Activated naive CD8-positive, alpha-beta T cell treated with anti-CD3 and anti-CD28 coated beads, Interleukin-2, amount 10 ng/mL, durations not matched to agents 7 days and 5 days (primary cell): ENCODE measurements at regions of chr17 and their contacts with region 1.

Region 1: GRCh38 chr17:79796763-79797491 is at the start of gene CBX8:
- DNase-seq: peak; percentile 99
- ATAC-seq: peak; percentile 89
- H3K4me3 Mint-ChIP-seq: peak within 1 kb of the TSS; percentile 89
- H3K27ac Mint-ChIP-seq: peak within 1 kb of the TSS; percentile 84
- H3K4me1 Mint-ChIP-seq: peaks cover 27% of the 10 kb centered on the region
- H3K27me3 Mint-ChIP-seq: peaks cover 35% of the 10 kb centered on the region
- total RNA-seq, gene CBX8: 4.9 to 5.5 TPM

Region 2: GRCh38 chr17:79691931-79692330 is 105.0 kb before region 1 on chr17:
- POLR2A ChIA-PET with region 1: no interaction called
- DNase-seq: no peak
- ATAC-seq: no peak
- H3K4me3 Mint-ChIP-seq: no peak overlapping the region
- H3K27ac Mint-ChIP-seq: no peak overlapping the region
- H3K4me1 Mint-ChIP-seq: no peaks in the 10 kb centered on the region
- H3K27me3 Mint-ChIP-seq: peaks cover 7% of the 10 kb centered on the region

Region 3: DNA sequence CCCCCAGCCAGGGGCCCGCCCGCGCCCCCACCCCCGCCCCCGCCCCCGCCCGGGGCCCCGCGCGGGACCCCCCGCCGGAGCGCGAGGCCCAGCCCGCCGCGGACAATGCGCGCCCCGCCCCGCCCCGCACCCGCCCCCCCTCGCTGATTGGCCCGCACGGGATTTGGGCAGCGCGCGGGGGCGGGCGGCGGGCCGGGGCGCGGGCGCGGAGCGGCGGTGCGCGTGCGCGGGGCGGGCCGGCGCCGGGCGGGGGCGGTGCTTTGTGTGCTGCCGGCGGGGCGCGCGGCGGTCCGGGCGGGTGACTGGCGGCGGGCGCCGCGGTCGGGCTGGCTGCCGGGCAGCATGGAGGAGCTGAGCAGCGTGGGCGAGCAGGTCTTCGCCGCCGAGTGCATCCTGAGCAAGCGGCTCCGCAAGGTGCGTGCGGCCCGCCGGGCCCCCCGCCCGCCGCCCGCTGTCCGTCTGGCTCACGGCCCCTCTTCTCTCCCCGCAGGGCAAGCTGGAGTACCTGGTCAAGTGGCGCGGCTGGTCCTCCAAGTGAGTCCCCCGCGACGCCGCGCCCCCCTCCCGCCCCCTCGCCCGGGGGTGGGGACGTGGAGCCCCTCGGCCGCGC is 18.9 kb before region 1 on chr17 and contains the start of gene CBX2:
- POLR2A ChIA-PET with region 1: interaction called, 17 read pairs
- DNase-seq: peak; percentile 92
- ATAC-seq: peak; percentile 82
- H3K4me3 Mint-ChIP-seq: peak within 1 kb of the TSS; percentile 93
- H3K27ac Mint-ChIP-seq: peak within 1 kb of the TSS; percentile 78
- H3K4me1 Mint-ChIP-seq: peaks cover 32% of the 10 kb centered on the region
- H3K27me3 Mint-ChIP-seq: peaks cover 48% of the 10 kb centered on the region
- total RNA-seq, gene CBX2: 9.2 to 9.6 TPM

Region 4: DNA sequence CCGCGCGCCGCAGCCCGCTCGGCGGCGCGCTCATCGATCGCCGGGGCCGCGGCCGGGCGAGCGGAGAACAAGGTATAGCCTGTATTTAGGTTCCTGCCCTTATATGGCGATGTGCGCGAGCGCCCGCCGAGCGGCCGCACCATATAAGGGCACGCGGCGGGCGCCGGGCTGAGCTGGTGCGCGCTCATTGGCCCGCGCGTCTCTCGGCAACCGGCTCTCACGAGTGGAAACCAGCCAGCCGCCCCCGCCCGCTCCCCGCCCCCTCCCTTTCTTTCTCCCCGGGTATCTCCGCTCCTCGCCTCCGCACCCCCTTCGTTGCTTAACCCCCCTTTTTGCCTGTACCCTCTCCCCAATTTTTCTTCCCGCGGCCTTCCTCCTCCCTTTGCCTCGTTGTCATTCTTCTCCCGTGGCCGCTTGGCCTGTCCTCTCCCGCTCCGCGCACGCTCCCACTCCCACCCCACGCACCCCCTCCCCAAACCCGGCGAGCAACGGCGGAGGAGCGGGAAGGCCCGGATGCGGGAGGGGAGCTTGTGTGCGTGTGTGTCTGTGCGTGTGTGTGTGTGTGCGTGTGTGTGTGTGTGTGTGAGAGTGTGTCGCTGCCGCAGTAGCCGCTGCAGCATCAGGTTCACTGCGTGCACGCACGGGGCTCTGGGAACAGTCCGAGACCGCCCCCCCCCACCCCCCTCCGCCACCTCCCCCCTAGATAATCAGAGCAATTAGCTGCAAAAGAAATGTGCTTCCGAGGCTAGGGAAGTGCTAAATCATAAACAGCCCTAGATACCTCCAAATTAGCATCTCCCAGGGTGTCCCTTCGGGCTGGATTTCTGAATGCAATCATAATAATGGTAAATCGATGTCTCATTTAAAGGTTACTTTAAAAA is 13.4 kb after region 1 on chr17:
- POLR2A ChIA-PET with region 1: interaction called, 10 read pairs
- DNase-seq: peak; percentile 82
- ATAC-seq: peak; percentile 87
- H3K4me3 Mint-ChIP-seq: peak overlapping the region; percentile 45
- H3K27ac Mint-ChIP-seq: no peak overlapping the region
- H3K4me1 Mint-ChIP-seq: peaks cover 26% of the 10 kb centered on the region
- H3K27me3 Mint-ChIP-seq: peaks cover 68% of the 10 kb centered on the region